Spleen (tissue), 13 donors: ENCODE measurements at regions of chr12 and their contacts with region 1.

Region 1: DNA sequence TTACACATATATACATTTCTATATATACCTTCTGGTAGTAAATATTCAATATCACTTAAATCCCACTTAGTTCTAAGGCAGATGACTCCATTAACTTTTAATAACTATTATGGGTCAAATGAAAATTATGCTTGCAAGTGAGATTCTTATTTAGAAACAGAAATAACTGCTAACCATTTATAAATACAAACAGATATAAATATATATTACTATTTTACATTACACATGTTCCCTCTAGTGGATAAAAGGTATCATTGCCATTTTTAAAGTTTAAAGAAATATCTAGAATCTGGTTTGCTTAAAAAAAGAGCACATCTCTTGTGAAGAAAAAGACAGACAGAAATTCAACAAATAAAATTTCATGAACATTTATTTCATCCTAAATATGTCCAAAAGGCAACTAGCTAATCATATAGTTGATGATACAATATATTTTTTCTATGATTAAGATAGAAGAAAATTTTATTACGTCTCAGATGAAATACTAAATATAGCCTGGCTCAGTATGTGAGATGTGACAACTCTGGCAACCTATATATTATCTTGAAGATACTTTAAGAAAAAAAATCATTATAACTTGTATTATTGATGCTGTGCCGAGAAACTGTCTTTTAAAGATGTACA is 11.7 kb upstream of the RAD51AP1 start:
- DNase-seq: no peak
- H3K4me3 ChIP-seq: no peak overlapping the region
- H3K27ac ChIP-seq: no peak overlapping the region
- H3K4me1 ChIP-seq: peaks cover 0 to 19% (median 0%) of the 10 kb centered on the region in 6 donors
- H3K27me3 ChIP-seq: no peaks in the 10 kb centered on the region
- CTCF ChIP-seq: peak in 10 of 11 experiments; percentile 31 to 73 (median 60)
- POLR2A ChIP-seq: no peak

Region 2: DNA sequence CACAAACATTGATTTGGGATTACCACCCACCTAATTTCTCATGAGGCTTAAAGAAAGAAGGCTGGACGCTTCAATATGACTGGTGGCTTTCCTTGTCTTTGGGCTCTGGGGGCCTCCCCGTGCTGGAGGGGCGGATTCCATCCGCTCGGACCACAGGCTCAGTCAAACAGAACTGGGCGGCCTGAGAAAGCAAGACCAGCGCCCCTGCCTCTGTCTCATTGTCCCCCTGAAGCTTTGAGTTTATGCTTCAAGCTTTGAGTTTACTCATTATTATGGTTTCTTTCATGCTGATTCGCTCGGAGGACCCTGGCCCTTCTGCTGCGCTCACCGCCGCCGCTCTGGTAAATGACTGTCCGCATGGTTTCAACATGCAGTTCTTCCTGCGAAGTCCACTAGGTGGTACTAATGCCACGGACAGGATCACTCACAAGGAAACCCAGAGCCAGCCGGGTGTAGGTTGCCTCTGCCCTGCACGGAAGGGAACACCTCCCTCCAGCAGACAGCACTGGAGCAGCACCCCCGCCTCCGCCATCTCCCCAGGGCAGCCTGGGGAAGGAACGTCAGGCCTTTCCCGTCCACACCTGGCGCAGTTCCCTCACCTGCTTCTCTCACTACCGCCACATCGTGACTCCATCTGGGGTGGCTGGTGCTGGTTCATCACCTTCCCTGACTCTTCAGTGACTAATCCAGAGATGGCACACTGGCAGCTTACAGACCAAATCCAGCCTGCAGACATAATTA is 219.3 kb before region 1 on chr12:
- intact Hi-C with region 1: loop called (anchors 10 kb)
- DNase-seq: no peak
- H3K4me3 ChIP-seq: no peak overlapping the region
- H3K27ac ChIP-seq: no peak overlapping the region
- H3K4me1 ChIP-seq: peaks cover 0 to 17% (median 4%) of the 10 kb centered on the region in 6 donors
- H3K27me3 ChIP-seq: no peaks in the 10 kb centered on the region
- CTCF ChIP-seq: peak in 9 of 11 experiments; percentile 26 to 68 (median 51)
- POLR2A ChIP-seq: no peak

Region 3: DNA sequence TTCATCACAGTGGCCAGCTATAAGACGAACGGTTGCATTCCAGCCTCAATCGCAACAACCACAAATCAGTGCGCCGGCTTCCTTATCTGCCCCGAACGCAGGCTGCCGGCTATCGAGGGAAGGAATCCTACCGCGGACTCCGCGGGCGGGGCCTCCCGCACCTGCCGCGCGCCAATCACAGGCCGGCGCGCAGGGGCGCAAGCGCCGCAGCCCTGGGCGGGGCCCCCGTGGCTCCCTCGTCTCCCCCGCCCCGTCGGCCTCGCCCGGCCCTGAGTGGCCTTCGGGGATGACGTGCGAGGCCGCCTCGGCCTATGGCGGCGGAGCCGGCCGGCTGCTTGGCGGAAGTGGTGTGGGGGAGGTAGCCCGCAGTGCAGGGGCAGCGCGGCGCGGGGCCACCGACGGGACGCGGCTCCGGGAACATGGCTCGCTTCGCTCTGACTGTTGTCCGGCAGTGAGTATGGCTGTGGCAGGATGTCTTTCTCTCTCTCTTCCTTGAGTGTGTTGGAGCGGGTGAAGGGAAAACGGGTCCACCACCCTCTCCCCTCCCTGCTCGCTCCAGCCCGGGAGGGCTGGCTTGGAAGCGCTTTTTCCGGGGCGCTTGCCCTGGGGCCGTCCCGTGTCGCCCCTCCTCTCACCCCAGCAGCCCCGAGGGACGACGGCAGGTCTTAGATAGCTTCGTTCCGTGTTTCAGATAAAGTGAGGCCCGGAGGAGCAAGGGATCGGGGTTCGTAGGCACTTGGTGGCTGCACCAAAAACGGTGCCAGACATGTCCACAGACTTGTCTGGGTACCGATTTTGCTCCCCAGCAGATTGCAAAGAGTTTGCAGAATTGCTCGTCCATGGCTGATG is 206.0 kb before region 1 on chr12 and contains the start of gene TIGAR:
- intact Hi-C with region 1: no loop called
- DNase-seq: peak; percentile 99
- H3K4me3 ChIP-seq: peak within 1 kb of the TSS; percentile 61 to 93 (median 83)
- H3K27ac ChIP-seq: peak within 1 kb of the TSS; percentile 50 to 94 (median 92)
- H3K4me1 ChIP-seq: peaks cover 16 to 48% (median 32%) of the 10 kb centered on the region in 6 donors
- H3K27me3 ChIP-seq: no peaks in the 10 kb centered on the region
- CTCF ChIP-seq: peak in 4 of 11 experiments; percentile 12 to 40 (median 21)
- POLR2A ChIP-seq: peak in 2 of 3 donors; percentile 58 to 59
- total RNA-seq, gene TIGAR: 7.1 to 16.7 (median 12.6) TPM

Region 4: DNA sequence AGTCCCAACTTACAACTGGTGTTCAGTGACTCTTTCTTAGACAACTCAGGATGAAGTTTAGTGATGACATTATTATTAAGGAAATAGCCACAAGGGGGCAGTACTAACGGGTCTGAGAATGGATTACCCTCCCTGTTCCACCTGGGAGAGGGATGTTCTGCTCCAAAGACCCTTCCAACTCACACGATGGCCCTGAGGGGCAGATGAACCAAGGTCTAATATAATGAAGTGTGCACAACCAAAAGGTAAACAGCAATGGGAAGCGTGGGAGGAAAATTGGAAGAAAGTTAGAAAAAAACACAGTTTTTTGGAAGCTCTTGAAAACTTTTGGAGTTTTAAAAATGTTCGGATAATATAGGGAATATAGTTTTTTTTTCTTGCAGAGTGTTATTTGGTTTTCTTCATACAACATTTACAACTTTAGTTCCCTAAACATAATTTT is 105.4 kb before region 1 on chr12:
- intact Hi-C with region 1: loop called (anchors 10 kb)
- DNase-seq: no peak
- H3K4me3 ChIP-seq: no peak overlapping the region
- H3K27ac ChIP-seq: no peak overlapping the region
- H3K4me1 ChIP-seq: no peaks in the 10 kb centered on the region
- H3K27me3 ChIP-seq: peaks cover 0 to 15% (median 3%) of the 10 kb centered on the region in 7 donors
- CTCF ChIP-seq: peak in 10 of 11 experiments; percentile 20 to 66 (median 48)
- POLR2A ChIP-seq: no peak

Region 5: DNA sequence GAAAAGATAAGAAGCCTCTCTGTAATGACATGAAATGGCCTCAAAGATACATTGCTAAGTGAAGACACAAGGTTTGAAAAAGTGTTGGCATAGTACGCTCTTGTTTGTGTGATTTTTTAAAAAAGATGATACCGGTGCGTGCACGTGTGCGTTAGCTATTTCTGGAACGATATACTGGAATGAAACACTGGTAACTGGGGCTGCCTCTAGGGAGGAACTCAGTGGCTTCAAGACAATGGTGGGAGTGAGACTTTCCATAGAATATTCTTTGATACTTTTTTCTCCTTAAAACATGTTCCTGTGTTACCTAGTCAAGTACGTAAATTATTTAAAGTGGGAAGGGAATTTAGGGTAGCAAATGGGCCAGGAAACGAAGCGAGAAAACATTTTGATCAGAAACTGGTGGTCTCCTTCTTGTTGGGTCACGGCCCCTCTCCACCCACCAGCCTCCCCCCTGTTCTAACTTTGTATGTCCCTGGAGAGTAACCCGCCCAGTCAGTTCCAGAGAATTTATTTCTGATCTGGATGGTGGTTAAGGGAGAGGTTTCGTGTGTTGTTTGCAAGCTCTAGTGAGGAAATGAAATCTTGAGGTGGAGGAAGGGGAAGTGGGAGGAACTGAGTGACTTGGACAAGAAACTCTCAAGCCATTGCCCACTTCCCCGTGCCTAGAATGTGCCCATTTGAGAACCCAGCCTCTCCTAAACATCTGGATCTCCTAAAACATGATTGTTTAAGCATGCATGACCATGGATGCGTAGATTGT is 88.0 kb before region 1 on chr12:
- intact Hi-C with region 1: no loop called
- DNase-seq: no peak
- H3K4me3 ChIP-seq: peak overlapping the region in 1 of 8 donors; percentile 15
- H3K27ac ChIP-seq: peak overlapping the region in 3 of 8 donors; percentile 4 to 16 (median 6)
- H3K4me1 ChIP-seq: peaks cover 0 to 31% (median 7%) of the 10 kb centered on the region in 6 donors
- H3K27me3 ChIP-seq: peaks cover 0 to 29% (median 0%) of the 10 kb centered on the region in 7 donors
- CTCF ChIP-seq: no peak
- POLR2A ChIP-seq: no peak